ENCODE measurements at regions of chr17 and their contacts with region 1.

Region 1: DNA sequence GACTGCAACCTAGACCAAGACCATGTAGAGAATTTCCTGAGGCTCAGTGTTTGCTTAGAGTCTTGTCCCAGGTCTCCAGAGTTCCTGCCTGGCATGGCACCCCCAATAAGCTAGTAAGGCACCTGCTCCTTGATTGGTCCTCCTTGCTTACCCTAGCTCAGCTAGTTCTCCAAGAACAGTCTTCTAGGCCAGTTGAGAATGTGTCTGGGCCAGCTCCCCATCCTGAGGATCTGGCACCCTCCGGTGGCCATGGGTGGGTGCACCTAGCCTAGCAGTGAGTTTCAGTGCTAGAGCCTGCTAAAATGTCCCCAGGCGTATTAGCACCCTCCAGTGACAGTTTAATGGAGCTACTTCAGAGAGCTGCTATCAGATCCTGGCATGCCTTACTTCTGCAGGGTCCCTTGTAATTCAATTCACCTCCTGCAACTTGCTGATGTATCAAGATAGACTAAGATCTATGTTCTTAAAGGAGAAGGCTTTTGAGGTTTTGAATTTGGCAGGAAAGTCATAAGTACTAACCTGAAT is 44.4 kb upstream of the MED13 start:
- DNase-seq: peak; percentile 77
- ATAC-seq: peak; percentile 100
- H3K4me3 ChIP-seq: no peak overlapping the region
- H3K27ac ChIP-seq: no peak overlapping the region
- H3K4me1 ChIP-seq: peaks cover 2% of the 10 kb centered on the region; the same call in 1 of the 2 replicates
- H3K27me3 ChIP-seq: no peaks in the 10 kb centered on the region; a peak in 1 of 4 replicates
- CTCF ChIP-seq: peak; percentile 97 to 100 (median 100); a peak in 5 of 6 replicates
- EP300 ChIP-seq: no peak
- POLR2A ChIP-seq: no peak
- RAD21 ChIP-seq: peak; percentile 100

Region 2: GRCh38 chr17:61644800-61645774 is 464.4 kb before region 1 on chr17:
- CTCF ChIA-PET with region 1: interaction called, 5 read pairs
- POLR2A ChIA-PET with region 1: no interaction called
- RAD21 ChIA-PET with region 1: interaction called, 4 read pairs
- SMC1A ChIA-PET with region 1: interaction called, 16 read pairs
- in situ Hi-C with region 1: no loop called
- intact Hi-C with region 1: no loop called
- DNase-seq: no peak
- ATAC-seq: no peak
- H3K4me3 ChIP-seq: no peak overlapping the region
- H3K27ac ChIP-seq: no peak overlapping the region
- H3K4me1 ChIP-seq: no peaks in the 10 kb centered on the region
- H3K27me3 ChIP-seq: no peaks in the 10 kb centered on the region
- CTCF ChIP-seq: no peak
- EP300 ChIP-seq: no peak
- POLR2A ChIP-seq: no peak
- RAD21 ChIP-seq: no peak

Region 3: GRCh38 chr17:61897303-61898200 is 211.9 kb before region 1 on chr17:
- CTCF ChIA-PET with region 1: interaction called, 32 read pairs
- POLR2A ChIA-PET with region 1: no interaction called
- RAD21 ChIA-PET with region 1: interaction called, 27 read pairs
- SMC1A ChIA-PET with region 1: interaction called, 7 read pairs
- in situ Hi-C with region 1: no loop called
- intact Hi-C with region 1: no loop called
- DNase-seq: no peak
- ATAC-seq: no peak
- H3K4me3 ChIP-seq: no peak overlapping the region
- H3K27ac ChIP-seq: no peak overlapping the region
- H3K4me1 ChIP-seq: no peaks in the 10 kb centered on the region
- H3K27me3 ChIP-seq: no peaks in the 10 kb centered on the region
- CTCF ChIP-seq: no peak
- EP300 ChIP-seq: no peak
- POLR2A ChIP-seq: no peak
- RAD21 ChIP-seq: no peak

Region 4: DNA sequence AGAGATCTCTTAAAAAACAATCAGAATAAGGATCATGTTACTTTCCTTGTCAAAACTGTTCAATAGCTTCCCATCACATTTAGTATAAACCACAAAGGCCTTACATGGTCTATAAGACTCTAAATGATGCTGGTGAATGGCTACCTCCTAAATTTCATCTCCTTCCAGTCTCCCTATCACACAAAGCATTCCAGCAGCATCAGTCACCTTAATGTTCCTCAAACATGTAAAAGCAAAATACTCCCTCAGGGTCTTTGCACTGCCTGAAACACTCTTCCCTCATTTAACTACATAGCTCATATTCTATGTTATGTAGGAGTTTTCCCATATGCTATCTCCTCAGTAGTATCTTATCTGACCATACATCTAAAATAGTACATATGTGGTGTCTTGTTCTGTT is 128.1 kb before region 1 on chr17:
- CTCF ChIA-PET with region 1: interaction called, 28 read pairs
- POLR2A ChIA-PET with region 1: no interaction called
- RAD21 ChIA-PET with region 1: interaction called, 19 read pairs
- SMC1A ChIA-PET with region 1: interaction called, 9 read pairs
- in situ Hi-C with region 1: no loop called
- intact Hi-C with region 1: loop called (anchors 5 kb)
- DNase-seq: no peak
- ATAC-seq: no peak
- H3K4me3 ChIP-seq: no peak overlapping the region
- H3K27ac ChIP-seq: no peak overlapping the region
- H3K4me1 ChIP-seq: no peaks in the 10 kb centered on the region
- H3K27me3 ChIP-seq: no peaks in the 10 kb centered on the region
- CTCF ChIP-seq: no peak
- EP300 ChIP-seq: no peak
- POLR2A ChIP-seq: no peak
- RAD21 ChIP-seq: no peak

Region 5: GRCh38 chr17:62038248-62038647 is 71.2 kb before region 1 on chr17:
- CTCF ChIA-PET with region 1: interaction called, 18 read pairs
- POLR2A ChIA-PET with region 1: no interaction called
- RAD21 ChIA-PET with region 1: interaction called, 26 read pairs
- SMC1A ChIA-PET with region 1: interaction called, 14 read pairs
- in situ Hi-C with region 1: no loop called
- intact Hi-C with region 1: no loop called
- DNase-seq: no peak
- ATAC-seq: no peak
- H3K4me3 ChIP-seq: no peak overlapping the region
- H3K27ac ChIP-seq: no peak overlapping the region
- H3K4me1 ChIP-seq: no peaks in the 10 kb centered on the region
- H3K27me3 ChIP-seq: no peaks in the 10 kb centered on the region
- CTCF ChIP-seq: no peak
- EP300 ChIP-seq: no peak
- POLR2A ChIP-seq: no peak
- RAD21 ChIP-seq: no peak

Region 6: GRCh38 chr17:62085511-62086408 is 23.7 kb before region 1 on chr17:
- CTCF ChIA-PET with region 1: interaction called, 183 read pairs
- POLR2A ChIA-PET with region 1: interaction called, 5 read pairs
- RAD21 ChIA-PET with region 1: interaction called, 134 read pairs
- SMC1A ChIA-PET with region 1: interaction called, 139 read pairs
- in situ Hi-C with region 1: no loop called
- intact Hi-C with region 1: no loop called
- DNase-seq: no peak
- ATAC-seq: peak; percentile 92
- H3K4me3 ChIP-seq: no peak overlapping the region
- H3K27ac ChIP-seq: no peak overlapping the region
- H3K4me1 ChIP-seq: peaks cover 5% of the 10 kb centered on the region; the same call in 1 of the 2 replicates
- H3K27me3 ChIP-seq: no peaks in the 10 kb centered on the region
- CTCF ChIP-seq: no peak
- EP300 ChIP-seq: no peak
- POLR2A ChIP-seq: no peak
- RAD21 ChIP-seq: no peak

Region 7: GRCh38 chr17:62343764-62344270 is 234.4 kb after region 1 on chr17:
- CTCF ChIA-PET with region 1: no interaction called
- POLR2A ChIA-PET with region 1: no interaction called
- RAD21 ChIA-PET with region 1: no interaction called
- SMC1A ChIA-PET with region 1: no interaction called
- in situ Hi-C with region 1: no loop called
- intact Hi-C with region 1: no loop called
- DNase-seq: no peak
- ATAC-seq: no peak
- H3K4me3 ChIP-seq: no peak overlapping the region
- H3K27ac ChIP-seq: no peak overlapping the region
- H3K4me1 ChIP-seq: no peaks in the 10 kb centered on the region
- H3K27me3 ChIP-seq: no peaks in the 10 kb centered on the region
- CTCF ChIP-seq: no peak
- EP300 ChIP-seq: no peak
- POLR2A ChIP-seq: no peak
- RAD21 ChIP-seq: no peak

Measured in GM12878 (cell line).